Dendritic cell treated with granulocyte-macrophage colony-stimulating factor and Interleukin-4, amounts not matched to agents 40 ng/mL and 50 ng/mL, for 4 days (primary cell): ENCODE measurements at regions of chr4 and their contacts with region 1.

Region 1: GRCh38 chr4:146175541-146176453 is at the start of gene LSM6:
- H3K4me3 Mint-ChIP-seq: peak within 1 kb of the TSS; percentile 88
- H3K27ac Mint-ChIP-seq: peak within 1 kb of the TSS; percentile 90
- H3K4me1 Mint-ChIP-seq: peaks cover 38% of the 10 kb centered on the region
- H3K27me3 Mint-ChIP-seq: no peaks in the 10 kb centered on the region

Region 2: GRCh38 chr4:145618932-145619638 is 556.7 kb before region 1 on chr4 and contains the start of gene MMAA:
- intact Hi-C with region 1: loop called (anchors 10 kb)
- H3K4me3 Mint-ChIP-seq: peak within 1 kb of the TSS; percentile 97
- H3K27ac Mint-ChIP-seq: peak within 1 kb of the TSS; percentile 99
- H3K4me1 Mint-ChIP-seq: peaks cover 21% of the 10 kb centered on the region
- H3K27me3 Mint-ChIP-seq: no peaks in the 10 kb centered on the region

Region 3: GRCh38 chr4:145936142-145936996 is 239.4 kb before region 1 on chr4:
- intact Hi-C with region 1: loop called (anchors 10 kb)
- H3K4me3 Mint-ChIP-seq: peak overlapping the region; percentile 96
- H3K27ac Mint-ChIP-seq: peak overlapping the region; percentile 80
- H3K4me1 Mint-ChIP-seq: peaks cover 33% of the 10 kb centered on the region
- H3K27me3 Mint-ChIP-seq: peaks cover 49% of the 10 kb centered on the region

Region 4: GRCh38 chr4:146095091-146095690 is 80.6 kb before region 1 on chr4:
- intact Hi-C with region 1: loop called (anchors 5 kb)
- H3K4me3 Mint-ChIP-seq: no peak overlapping the region
- H3K27ac Mint-ChIP-seq: no peak overlapping the region
- H3K4me1 Mint-ChIP-seq: peaks cover 15% of the 10 kb centered on the region
- H3K27me3 Mint-ChIP-seq: peaks cover 6% of the 10 kb centered on the region

Region 5: DNA sequence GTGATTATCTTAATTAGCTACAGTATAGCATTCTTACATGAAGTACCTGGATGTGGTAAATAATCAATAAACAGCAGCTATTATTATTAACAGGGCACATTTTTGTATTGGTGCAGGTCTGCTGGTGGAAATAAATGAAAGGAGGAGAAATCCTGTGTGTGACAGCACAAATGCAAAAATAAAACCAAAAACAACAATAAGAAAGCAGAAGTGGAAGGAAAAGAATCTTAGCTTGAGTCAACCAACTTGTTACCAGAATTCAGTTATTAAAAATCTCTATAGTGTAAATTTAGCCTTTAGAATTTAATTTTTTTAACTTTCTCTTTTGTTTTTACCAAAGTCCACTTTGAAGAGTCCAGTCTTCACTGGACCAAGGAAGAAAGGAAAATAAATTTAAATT is 63.4 kb before region 1 on chr4:
- intact Hi-C with region 1: no loop called
- H3K4me3 Mint-ChIP-seq: no peak overlapping the region
- H3K27ac Mint-ChIP-seq: peak overlapping the region; percentile 15
- H3K4me1 Mint-ChIP-seq: peaks cover 49% of the 10 kb centered on the region
- H3K27me3 Mint-ChIP-seq: no peaks in the 10 kb centered on the region

Region 6: DNA sequence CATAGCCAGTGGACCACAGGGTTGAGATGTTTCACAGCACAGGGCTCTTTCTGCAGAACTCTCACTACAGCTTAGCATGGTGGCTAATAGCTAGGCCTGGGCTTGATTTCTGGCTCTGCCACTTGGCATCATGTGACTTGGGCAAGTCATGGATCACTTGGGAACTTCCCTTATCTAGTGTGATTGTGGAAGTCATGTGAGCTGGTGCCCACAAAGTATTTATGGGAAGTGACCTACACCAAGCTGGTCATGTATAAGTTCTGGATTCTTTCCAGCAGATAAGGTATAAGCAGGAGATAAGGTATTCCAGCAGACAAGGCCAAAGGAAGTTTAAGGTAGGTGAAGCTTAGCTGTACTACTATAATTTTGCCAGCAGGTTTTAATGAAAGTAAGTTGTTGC is 99.6 kb after region 1 on chr4:
- intact Hi-C with region 1: no loop called
- H3K4me3 Mint-ChIP-seq: no peak overlapping the region
- H3K27ac Mint-ChIP-seq: no peak overlapping the region
- H3K4me1 Mint-ChIP-seq: peaks cover 6% of the 10 kb centered on the region
- H3K27me3 Mint-ChIP-seq: no peaks in the 10 kb centered on the region